Mammary epithelial cell (primary cell): ENCODE measurements at regions of chr22 and their contacts with region 1.

Region 1: GRCh38 chr22:37623075-37624016 is 14.7 kb downstream of the GGA1 start:
- DNase-seq: no peak
- H3K4me3 ChIP-seq: no peak overlapping the region
- H3K27ac ChIP-seq: no peak overlapping the region
- H3K4me1 ChIP-seq: no peaks in the 10 kb centered on the region
- H3K27me3 ChIP-seq: no peaks in the 10 kb centered on the region
- CTCF ChIP-seq: peak; percentile 53 to 78

Region 2: GRCh38 chr22:37658133-37659065 is 35.1 kb after region 1 on chr22 and contains the start of gene PDXP:
- CTCF ChIA-PET with region 1: no interaction called
- dilution Hi-C with region 1: loop called (anchors 5 kb)
- in situ Hi-C with region 1: no loop called
- intact Hi-C with region 1: no loop called
- DNase-seq: peak; percentile 100
- H3K4me3 ChIP-seq: peak within 1 kb of the TSS; percentile 47 to 84 (median 55)
- H3K27ac ChIP-seq: peak within 1 kb of the TSS; percentile 41
- H3K4me1 ChIP-seq: peaks cover 21% of the 10 kb centered on the region
- H3K27me3 ChIP-seq: no peaks in the 10 kb centered on the region
- CTCF ChIP-seq: no peak
- total RNA-seq, gene PDXP: 5.8 to 6.9 TPM

Region 3: GRCh38 chr22:37676736-37677492 is 53.6 kb after region 1 on chr22:
- CTCF ChIA-PET with region 1: no interaction called
- dilution Hi-C with region 1: no loop called
- in situ Hi-C with region 1: no loop called
- intact Hi-C with region 1: loop called (anchors 1 kb)
- DNase-seq: peak; percentile 96
- H3K4me3 ChIP-seq: peak overlapping the region; percentile 67 to 76 (median 72)
- H3K27ac ChIP-seq: peak overlapping the region; percentile 78
- H3K4me1 ChIP-seq: peaks cover 33% of the 10 kb centered on the region
- H3K27me3 ChIP-seq: no peaks in the 10 kb centered on the region
- CTCF ChIP-seq: no peak

Region 4: GRCh38 chr22:37726241-37726887 is 103.0 kb after region 1 on chr22:
- CTCF ChIA-PET with region 1: no interaction called
- dilution Hi-C with region 1: no loop called
- in situ Hi-C with region 1: no loop called
- intact Hi-C with region 1: loop called (anchors 1 kb)
- DNase-seq: peak; percentile 19
- H3K4me3 ChIP-seq: no peak overlapping the region
- H3K27ac ChIP-seq: no peak overlapping the region
- H3K4me1 ChIP-seq: no peaks in the 10 kb centered on the region
- H3K27me3 ChIP-seq: no peaks in the 10 kb centered on the region
- CTCF ChIP-seq: peak in 1 of 2 donors; percentile 12

Region 5: DNA sequence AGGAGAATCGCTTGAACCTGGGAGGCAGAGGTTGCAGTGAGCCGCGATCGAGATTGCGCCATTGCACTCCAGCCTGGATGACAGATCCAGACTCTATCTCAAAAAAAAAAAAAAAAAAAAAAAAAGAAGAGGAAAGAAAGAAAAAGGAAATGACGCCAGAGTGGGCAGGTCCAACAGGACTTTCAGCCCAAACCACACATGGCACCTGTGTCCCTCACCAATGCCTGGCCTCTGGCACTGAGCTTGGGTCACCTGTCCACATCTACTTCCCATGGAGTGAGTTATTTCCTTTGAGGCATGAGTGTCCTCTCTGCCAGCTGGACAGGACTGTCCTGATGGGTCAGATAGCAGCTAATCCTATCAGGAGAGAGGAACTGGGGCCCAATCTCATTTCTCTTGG is 169.1 kb after region 1 on chr22:
- CTCF ChIA-PET with region 1: no interaction called
- dilution Hi-C with region 1: no loop called
- in situ Hi-C with region 1: loop called in 1 of 2 experiments (anchors 10 kb)
- intact Hi-C with region 1: loop called (anchors 1 kb)
- DNase-seq: no peak
- H3K4me3 ChIP-seq: no peak overlapping the region
- H3K27ac ChIP-seq: no peak overlapping the region
- H3K4me1 ChIP-seq: no peaks in the 10 kb centered on the region
- H3K27me3 ChIP-seq: no peaks in the 10 kb centered on the region
- CTCF ChIP-seq: no peak

Region 6: GRCh38 chr22:37797874-37798500 is 174.6 kb after region 1 on chr22:
- CTCF ChIA-PET with region 1: no interaction called
- dilution Hi-C with region 1: no loop called
- in situ Hi-C with region 1: loop called in 1 of 2 experiments (anchors 10 kb)
- intact Hi-C with region 1: no loop called
- DNase-seq: no peak
- H3K4me3 ChIP-seq: no peak overlapping the region
- H3K27ac ChIP-seq: no peak overlapping the region
- H3K4me1 ChIP-seq: peaks cover 6% of the 10 kb centered on the region
- H3K27me3 ChIP-seq: no peaks in the 10 kb centered on the region
- CTCF ChIP-seq: no peak

Region 7: DNA sequence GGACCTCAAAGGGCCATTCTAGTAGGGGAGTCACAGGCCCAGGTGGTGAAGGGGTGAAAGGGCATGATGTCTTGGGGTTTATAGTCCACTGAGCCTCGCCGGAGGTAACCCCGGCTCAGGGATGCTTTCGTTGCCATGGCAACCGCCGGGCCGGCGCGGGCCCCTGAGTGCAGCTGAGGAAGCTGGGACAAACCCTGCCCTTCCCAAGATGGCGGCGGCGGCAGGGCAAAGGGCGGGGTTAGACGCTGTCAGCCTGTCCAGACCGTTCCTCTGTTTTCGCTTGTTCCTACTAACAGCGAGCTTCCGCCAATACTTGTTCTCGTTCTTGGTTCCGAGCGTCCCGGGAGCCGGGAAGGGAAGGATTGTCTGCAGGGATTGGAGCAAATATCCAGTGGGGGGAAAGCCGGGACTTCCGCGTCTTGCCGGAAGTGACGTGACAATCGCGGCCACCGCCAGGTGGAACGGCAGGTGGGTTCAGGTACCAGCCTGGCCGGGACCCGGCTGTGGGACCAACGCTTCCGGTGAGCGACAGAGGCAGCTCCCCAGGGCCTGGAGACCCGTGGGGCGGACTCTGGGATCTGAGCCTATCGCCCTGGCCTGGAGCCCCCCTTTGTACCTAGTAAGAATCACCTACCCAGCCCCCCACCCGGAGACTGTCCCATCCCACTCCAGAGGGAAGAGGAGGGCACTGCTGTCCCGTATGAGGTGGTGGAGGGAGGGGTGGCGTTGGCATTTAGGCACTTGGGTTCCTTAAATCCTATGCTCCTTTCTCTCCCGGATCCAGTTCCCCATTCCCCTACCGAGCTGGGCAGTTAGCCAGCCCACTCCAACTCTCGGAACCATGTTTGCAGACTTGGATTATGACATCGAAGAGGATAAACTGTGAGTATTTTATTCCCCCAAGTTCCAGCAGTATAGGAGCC is 433.9 kb after region 1 on chr22 and contains the start of gene PICK1:
- CTCF ChIA-PET with region 1: no interaction called
- dilution Hi-C with region 1: no loop called
- in situ Hi-C with region 1: no loop called
- intact Hi-C with region 1: no loop called
- DNase-seq: peak; percentile 93
- H3K4me3 ChIP-seq: peak within 1 kb of the TSS; percentile 65 to 71 (median 71)
- H3K27ac ChIP-seq: peak within 1 kb of the TSS; percentile 73
- H3K4me1 ChIP-seq: peaks cover 6% of the 10 kb centered on the region
- H3K27me3 ChIP-seq: no peaks in the 10 kb centered on the region
- CTCF ChIP-seq: peak in 1 of 2 donors; percentile 20
- total RNA-seq, gene PICK1: 38.8 to 40.7 TPM